ENCODE measurements at regions of chr7 and their contacts with region 1.

Region 1: DNA sequence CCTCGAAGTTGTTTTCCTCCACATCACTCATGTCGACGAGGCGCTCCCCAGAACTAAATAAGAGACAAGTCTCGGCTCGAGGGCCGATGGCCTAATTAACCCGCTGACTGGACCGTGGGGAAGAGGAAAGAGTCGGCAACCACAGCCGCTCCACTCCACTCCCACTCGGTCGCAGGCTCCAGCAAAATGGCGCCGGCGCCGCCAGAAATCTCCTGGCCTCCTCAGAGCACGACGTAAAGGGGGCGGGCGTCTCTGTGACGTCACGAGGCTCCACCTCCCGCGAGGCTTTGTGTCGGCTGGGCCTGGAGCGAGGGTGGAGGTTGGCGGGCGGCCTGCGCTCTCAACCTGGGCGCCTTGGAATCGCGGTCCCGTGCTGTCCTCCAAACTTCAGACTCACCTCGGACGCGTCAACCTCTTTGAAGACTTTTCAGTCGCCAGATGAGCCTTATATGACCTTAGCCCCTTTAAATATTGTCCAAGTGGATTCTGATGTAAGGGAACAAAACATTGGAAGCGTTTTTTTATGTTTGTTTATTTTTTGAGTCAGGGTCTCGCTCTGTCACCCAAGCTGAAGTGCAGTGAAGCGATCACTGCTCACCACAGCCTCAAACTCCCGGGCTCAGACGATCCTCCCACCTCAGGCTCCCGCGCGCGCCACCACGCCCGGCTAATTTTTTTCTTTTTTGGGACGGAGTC is at the start of gene TRA2A:
- DNase-seq: peak; percentile 86
- ATAC-seq: peak; percentile 84
- H3K4me3 ChIP-seq: peak within 1 kb of the TSS; percentile 99
- H3K27ac ChIP-seq: peak within 1 kb of the TSS; percentile 99
- H3K4me1 ChIP-seq: 0 out of 2 replicates have a peak, but pooled peaks cover 2% of the 10 kb centered on the region
- H3K27me3 ChIP-seq: no peaks in the 10 kb centered on the region
- CTCF ChIP-seq: no peak
- EP300 ChIP-seq: 0 out of 4 replicates have a peak, but pooled peaks of 1 of the 2 experiments have one; percentile 22
- POLR2A ChIP-seq: peak; percentile 98
- RAD21 ChIP-seq: no peak
- polyA plus RNA-seq, gene TRA2A: 69.2 to 83.1 TPM

Region 2: GRCh38 chr7:23347682-23348180 is 184.2 kb before region 1 on chr7:
- CTCF ChIA-PET with region 1: no interaction called
- POLR2A ChIA-PET with region 1: no interaction called
- RAD21 ChIA-PET with region 1: interaction called, 3 read pairs
- SMC1A ChIA-PET with region 1: no interaction called
- in situ Hi-C with region 1: no loop called
- intact Hi-C with region 1: loop called (anchors 5 kb)
- DNase-seq: no peak
- ATAC-seq: 0 out of 3 replicates have a peak, but pooled peaks have one; percentile 21
- H3K4me3 ChIP-seq: no peak overlapping the region
- H3K27ac ChIP-seq: no peak overlapping the region
- H3K4me1 ChIP-seq: peaks cover 19% of the 10 kb centered on the region
- H3K27me3 ChIP-seq: no peaks in the 10 kb centered on the region
- CTCF ChIP-seq: no peak
- EP300 ChIP-seq: no peak
- POLR2A ChIP-seq: no peak
- RAD21 ChIP-seq: no peak

Region 3: DNA sequence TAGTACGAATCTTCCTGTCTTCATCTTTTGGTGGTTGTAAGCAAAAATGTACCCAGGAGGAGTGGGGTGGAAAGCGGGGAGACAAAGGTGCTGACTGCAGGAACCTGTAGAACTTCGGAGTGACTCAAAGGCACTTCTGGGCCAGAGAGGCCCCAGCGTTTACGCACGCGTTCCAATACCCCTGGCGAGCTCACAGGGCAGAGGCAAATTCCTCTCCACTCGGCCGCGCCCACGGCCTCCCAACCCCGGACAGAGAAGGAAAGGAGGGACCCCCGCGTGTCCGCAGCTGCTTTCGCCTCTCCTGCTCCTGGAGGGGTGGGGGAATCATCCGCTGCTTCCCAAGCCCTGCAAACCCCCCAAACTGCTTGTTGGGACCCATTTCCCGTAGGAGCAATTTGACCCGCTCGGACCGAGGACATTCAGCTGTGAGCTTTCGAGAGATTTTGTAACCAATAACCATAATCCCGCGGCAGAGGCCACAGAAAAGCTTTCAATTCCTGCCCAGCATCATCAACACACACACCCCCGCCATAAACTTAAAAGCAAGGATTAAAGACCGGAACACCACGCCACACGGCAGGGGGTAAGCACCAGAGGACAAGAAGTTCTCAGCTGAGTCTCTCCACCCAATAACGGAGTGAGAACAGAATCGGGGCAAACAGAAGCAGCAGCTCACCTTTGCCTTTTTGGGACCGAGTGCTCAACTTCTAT is 64.0 kb before region 1 on chr7:
- CTCF ChIA-PET with region 1: interaction called, 7 read pairs
- POLR2A ChIA-PET with region 1: interaction called, 18 read pairs
- RAD21 ChIA-PET with region 1: interaction called, 10 read pairs
- SMC1A ChIA-PET with region 1: interaction called, 10 read pairs
- in situ Hi-C with region 1: no loop called
- intact Hi-C with region 1: no loop called
- DNase-seq: no peak
- ATAC-seq: peak; percentile 31
- H3K4me3 ChIP-seq: peak overlapping the region; percentile 96
- H3K27ac ChIP-seq: peak overlapping the region; percentile 94
- H3K4me1 ChIP-seq: peaks cover 10% of the 10 kb centered on the region
- H3K27me3 ChIP-seq: no peaks in the 10 kb centered on the region
- CTCF ChIP-seq: no peak
- EP300 ChIP-seq: no peak
- POLR2A ChIP-seq: no peak; the same call in 1 of the 2 replicates
- RAD21 ChIP-seq: no peak

Region 4: DNA sequence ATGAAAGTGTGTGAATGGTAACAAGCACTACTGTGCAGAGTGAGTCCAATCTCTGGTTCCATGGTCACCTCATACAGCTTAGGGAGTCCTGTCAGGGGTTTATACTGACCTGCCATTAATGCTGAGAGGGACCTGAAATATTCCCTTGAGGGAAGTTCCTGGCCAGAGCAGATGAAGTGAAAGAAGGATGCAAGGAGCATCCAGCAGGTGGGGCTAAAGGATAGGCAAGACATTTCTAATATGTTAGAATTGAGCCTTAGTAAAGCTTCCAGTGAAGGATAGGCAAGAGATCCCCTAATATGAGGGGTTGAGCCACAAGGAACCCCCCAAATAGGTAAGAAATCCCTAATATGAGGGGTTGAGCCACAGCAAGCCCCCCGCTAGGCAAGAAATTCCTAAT is 122.6 kb after region 1 on chr7:
- CTCF ChIA-PET with region 1: no interaction called
- POLR2A ChIA-PET with region 1: no interaction called
- RAD21 ChIA-PET with region 1: no interaction called
- SMC1A ChIA-PET with region 1: no interaction called
- in situ Hi-C with region 1: no loop called
- intact Hi-C with region 1: no loop called
- DNase-seq: no peak
- ATAC-seq: no peak
- H3K4me3 ChIP-seq: no peak overlapping the region
- H3K27ac ChIP-seq: no peak overlapping the region
- H3K4me1 ChIP-seq: no peaks in the 10 kb centered on the region
- H3K27me3 ChIP-seq: no peaks in the 10 kb centered on the region
- CTCF ChIP-seq: 0 out of 6 replicates have a peak, but pooled peaks of 2 of the 3 experiments have one; percentile 16 to 31
- EP300 ChIP-seq: no peak
- POLR2A ChIP-seq: no peak
- RAD21 ChIP-seq: peak; percentile 15; the same call in 1 of the 2 replicates

Measured in GM12878 (cell line).